Naive thymus-derived CD4-positive, alpha-beta T cell (primary cell): ENCODE measurements at regions of chr6 and their contacts with region 1.

Region 1: GRCh38 chr6:43174263-43175112 is 3.4 kb downstream of the SRF start:
- DNase-seq: peak; percentile 66 to 92 (median 88)
- ATAC-seq: peak; percentile 77
- H3K4me3 ChIP-seq: peak overlapping the region; percentile 72
- H3K4me3 Mint-ChIP-seq: peak overlapping the region; percentile 85 to 99 (median 96)
- H3K27ac ChIP-seq: peak overlapping the region; percentile 73
- H3K27ac Mint-ChIP-seq: peak overlapping the region; percentile 90 to 98 (median 94)
- H3K4me1 ChIP-seq: peaks cover 26 to 29% of the 10 kb centered on the region in 2 donors
- H3K4me1 Mint-ChIP-seq: peaks cover 35 to 49% (median 40%) of the 10 kb centered on the region in 7 donors
- H3K27me3 ChIP-seq: no peaks in the 10 kb centered on the region
- H3K27me3 Mint-ChIP-seq: peaks cover 0 to 2% (median 0%) of the 10 kb centered on the region in 5 donors

Region 2: GRCh38 chr6:41895300-41896233 is 1278.9 kb before region 1 on chr6 and contains the start of gene USP49:
- CTCF ChIA-PET with region 1: no interaction called
- POLR2A ChIA-PET with region 1: no interaction called
- intact Hi-C with region 1: loop called in 1 of 2 experiments (anchors 5 kb)
- DNase-seq: peak; percentile 83 to 92 (median 90)
- ATAC-seq: peak; percentile 97
- H3K4me3 ChIP-seq: peak within 1 kb of the TSS; percentile 69
- H3K4me3 Mint-ChIP-seq: peak within 1 kb of the TSS in 1 of 10 donors; percentile 94
- H3K27ac ChIP-seq: peak within 1 kb of the TSS; percentile 76
- H3K27ac Mint-ChIP-seq: peak within 1 kb of the TSS in 7 of 9 donors; percentile 78 to 97 (median 93)
- H3K4me1 ChIP-seq: peaks cover 14 to 26% of the 10 kb centered on the region in 2 donors
- H3K4me1 Mint-ChIP-seq: peaks cover 5 to 17% (median 11%) of the 10 kb centered on the region in 7 donors
- H3K27me3 ChIP-seq: no peaks in the 10 kb centered on the region
- H3K27me3 Mint-ChIP-seq: peaks cover 0 to 7% (median 0%) of the 10 kb centered on the region in 5 donors
- total RNA-seq, gene USP49: 1.8 to 6.0 (median 3.1) TPM

Region 3: GRCh38 chr6:42782622-42783176 is 391.8 kb before region 1 on chr6:
- CTCF ChIA-PET with region 1: no interaction called
- POLR2A ChIA-PET with region 1: no interaction called
- intact Hi-C with region 1: loop called (anchors 2 kb)
- DNase-seq: peak in 8 of 9 donors; percentile 65 to 88 (median 82)
- ATAC-seq: peak; percentile 75
- H3K4me3 ChIP-seq: peak overlapping the region; percentile 89
- H3K4me3 Mint-ChIP-seq: peak overlapping the region in 8 of 10 donors; percentile 89 to 100 (median 98)
- H3K27ac ChIP-seq: peak overlapping the region; percentile 100
- H3K27ac Mint-ChIP-seq: peak overlapping the region in 5 of 9 donors; percentile 99 to 100 (median 100)
- H3K4me1 ChIP-seq: peaks cover 36 to 45% of the 10 kb centered on the region in 2 donors
- H3K4me1 Mint-ChIP-seq: peaks cover under 1 to 35% (median 30%) of the 10 kb centered on the region in 7 donors
- H3K27me3 ChIP-seq: no peaks in the 10 kb centered on the region
- H3K27me3 Mint-ChIP-seq: no peaks in the 10 kb centered on the region

Region 4: DNA sequence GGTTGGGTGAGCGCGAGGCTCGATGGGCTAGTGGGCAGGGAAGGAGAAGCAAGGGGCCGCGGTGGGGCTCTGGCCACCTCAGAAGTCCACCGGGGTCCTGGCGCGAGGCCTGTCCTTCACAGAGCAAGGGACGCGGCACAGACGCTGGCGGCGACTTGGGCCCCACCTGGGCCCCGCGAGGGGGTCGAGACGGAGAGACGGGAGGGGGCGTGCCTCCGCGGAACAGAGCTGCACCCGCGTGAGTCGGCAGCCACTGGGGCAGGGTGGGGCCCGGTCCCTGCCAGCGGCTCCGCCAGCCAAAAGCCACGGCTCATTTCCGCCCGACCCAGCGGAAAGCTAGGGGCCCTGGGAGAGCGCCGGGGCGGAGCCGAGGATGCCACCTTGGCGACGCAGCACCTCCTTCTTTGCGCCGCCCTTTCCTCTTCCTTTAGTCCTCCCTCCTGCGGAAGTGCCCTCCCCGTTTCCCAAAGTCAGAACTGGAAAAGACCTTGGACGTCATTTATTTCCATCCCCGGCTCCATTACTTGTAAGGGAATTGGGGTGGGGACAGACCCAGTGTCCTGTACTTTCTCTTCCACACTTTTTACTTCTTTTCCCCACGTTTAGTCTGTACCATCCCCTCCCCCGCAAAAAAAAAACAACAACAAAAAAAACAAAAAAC is 120.8 kb before region 1 on chr6 and contains the start of gene CUL7:
- CTCF ChIA-PET with region 1: no interaction called
- POLR2A ChIA-PET with region 1: interaction called, 3 read pairs
- intact Hi-C with region 1: loop called in 1 of 2 experiments (anchors 1 kb)
- DNase-seq: peak; percentile 72 to 90 (median 88)
- ATAC-seq: peak; percentile 99
- H3K4me3 ChIP-seq: peak within 1 kb of the TSS; percentile 70
- H3K4me3 Mint-ChIP-seq: peak within 1 kb of the TSS; percentile 86 to 99 (median 94)
- H3K27ac ChIP-seq: peak within 1 kb of the TSS; percentile 89
- H3K27ac Mint-ChIP-seq: peak within 1 kb of the TSS; percentile 92 to 99 (median 97)
- H3K4me1 ChIP-seq: peaks cover 8 to 24% of the 10 kb centered on the region in 2 donors
- H3K4me1 Mint-ChIP-seq: peaks cover 37 to 58% (median 50%) of the 10 kb centered on the region in 7 donors
- H3K27me3 ChIP-seq: no peaks in the 10 kb centered on the region
- H3K27me3 Mint-ChIP-seq: no peaks in the 10 kb centered on the region
- total RNA-seq, gene CUL7: 9.8 to 14.5 (median 12.7) TPM

Region 5: DNA sequence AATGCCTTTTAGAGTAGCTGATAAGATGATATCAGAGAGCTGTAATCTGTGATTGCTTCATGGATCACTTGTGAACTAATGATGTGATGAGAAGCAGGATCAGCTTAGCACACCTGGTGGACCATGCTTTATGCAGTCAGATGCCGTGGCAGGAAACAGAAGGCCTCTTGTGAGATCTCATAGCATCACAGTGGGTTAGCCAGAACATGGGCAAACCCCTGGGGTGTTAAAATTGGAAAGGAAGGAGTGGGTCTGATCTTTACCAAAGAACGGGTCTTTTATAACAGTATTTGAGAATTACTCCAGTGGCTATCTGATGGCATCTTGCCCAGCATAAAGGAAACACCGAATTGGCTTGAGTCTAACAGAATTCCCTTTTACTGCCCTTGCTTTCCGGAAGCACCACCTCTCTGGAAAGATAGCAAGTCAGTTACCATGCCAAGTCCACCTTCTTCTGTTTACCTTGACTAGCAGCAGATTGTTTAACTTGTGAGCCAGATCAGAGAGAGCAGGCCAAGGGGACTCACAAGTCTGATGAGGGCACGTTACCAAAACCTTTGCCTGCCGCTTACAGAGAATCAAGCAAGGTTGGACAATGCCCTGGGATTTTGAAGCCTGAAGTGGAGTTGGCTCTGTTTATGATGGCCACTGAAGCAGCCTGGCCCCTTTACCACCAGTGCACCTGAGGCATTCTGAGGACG is 24.3 kb before region 1 on chr6:
- CTCF ChIA-PET with region 1: no interaction called
- POLR2A ChIA-PET with region 1: no interaction called
- intact Hi-C with region 1: no loop called
- DNase-seq: no peak
- ATAC-seq: no peak
- H3K4me3 ChIP-seq: no peak overlapping the region
- H3K4me3 Mint-ChIP-seq: no peak overlapping the region
- H3K27ac ChIP-seq: no peak overlapping the region
- H3K27ac Mint-ChIP-seq: no peak overlapping the region
- H3K4me1 ChIP-seq: no peaks in the 10 kb centered on the region
- H3K4me1 Mint-ChIP-seq: peaks cover 0 to 4% (median 0%) of the 10 kb centered on the region in 7 donors
- H3K27me3 ChIP-seq: no peaks in the 10 kb centered on the region
- H3K27me3 Mint-ChIP-seq: no peaks in the 10 kb centered on the region

Region 6: GRCh38 chr6:43274916-43275597 is 100.6 kb after region 1 on chr6:
- CTCF ChIA-PET with region 1: no interaction called
- POLR2A ChIA-PET with region 1: no interaction called
- intact Hi-C with region 1: loop called in 1 of 2 experiments (anchors 5 kb)
- DNase-seq: peak in 7 of 9 donors; percentile 7 to 45 (median 18)
- ATAC-seq: peak; percentile 19
- H3K4me3 ChIP-seq: peak overlapping the region; percentile 40
- H3K4me3 Mint-ChIP-seq: peak overlapping the region; percentile 69 to 95 (median 85)
- H3K27ac ChIP-seq: peak overlapping the region; percentile 8
- H3K27ac Mint-ChIP-seq: peak overlapping the region in 1 of 9 donors; percentile 8
- H3K4me1 ChIP-seq: peaks cover 0 to 6% of the 10 kb centered on the region in 2 donors
- H3K4me1 Mint-ChIP-seq: peaks cover 5 to 20% (median 5%) of the 10 kb centered on the region in 7 donors
- H3K27me3 ChIP-seq: no peaks in the 10 kb centered on the region
- H3K27me3 Mint-ChIP-seq: peaks cover 0 to 75% (median 6%) of the 10 kb centered on the region in 5 donors

Region 7: GRCh38 chr6:43308101-43308989 is 133.9 kb after region 1 on chr6 and contains the start of gene CRIP3:
- CTCF ChIA-PET with region 1: no interaction called
- POLR2A ChIA-PET with region 1: no interaction called
- intact Hi-C with region 1: no loop called
- DNase-seq: peak; percentile 12 to 58 (median 50)
- ATAC-seq: peak; percentile 82
- H3K4me3 ChIP-seq: peak within 1 kb of the TSS; percentile 59
- H3K4me3 Mint-ChIP-seq: peak within 1 kb of the TSS; percentile 78 to 89 (median 84)
- H3K27ac ChIP-seq: peak within 1 kb of the TSS; percentile 27
- H3K27ac Mint-ChIP-seq: peak within 1 kb of the TSS in 6 of 9 donors; percentile 24 to 65 (median 36)
- H3K4me1 ChIP-seq: peaks cover 8 to 11% of the 10 kb centered on the region in 2 donors
- H3K4me1 Mint-ChIP-seq: peaks cover 6 to 13% (median 10%) of the 10 kb centered on the region in 7 donors
- H3K27me3 ChIP-seq: no peaks in the 10 kb centered on the region
- H3K27me3 Mint-ChIP-seq: peaks cover 0 to 27% (median 0%) of the 10 kb centered on the region in 5 donors
- total RNA-seq, gene CRIP3: 2.1 to 7.4 (median 4.8) TPM in 4 of 5 experiments, not detected in the other

Region 8: GRCh38 chr6:43516697-43517504 is 342.4 kb after region 1 on chr6 and contains the starts of genes POLR1C and YIPF3:
- CTCF ChIA-PET with region 1: no interaction called
- POLR2A ChIA-PET with region 1: no interaction called
- intact Hi-C with region 1: loop called (anchors 2 kb)
- DNase-seq: peak; percentile 83 to 97 (median 96)
- ATAC-seq: peak; percentile 95
- H3K4me3 ChIP-seq: peak within 1 kb of the TSS; percentile 100
- H3K4me3 Mint-ChIP-seq: no peak within 1 kb of the TSS
- H3K27ac ChIP-seq: peak within 1 kb of the TSS; percentile 96
- H3K27ac Mint-ChIP-seq: no peak within 1 kb of the TSS
- H3K4me1 ChIP-seq: peaks cover 32 to 36% of the 10 kb centered on the region in 2 donors
- H3K4me1 Mint-ChIP-seq: peaks cover 8 to 36% (median 31%) of the 10 kb centered on the region in 7 donors
- H3K27me3 ChIP-seq: no peaks in the 10 kb centered on the region
- H3K27me3 Mint-ChIP-seq: no peaks in the 10 kb centered on the region
- total RNA-seq, gene POLR1C: 36.3 to 61.1 (median 40.9) TPM
- total RNA-seq, gene YIPF3: 54.4 to 75.9 (median 67.3) TPM